ENCODE measurements at regions of chrX and their contacts with region 1.

Region 1: DNA sequence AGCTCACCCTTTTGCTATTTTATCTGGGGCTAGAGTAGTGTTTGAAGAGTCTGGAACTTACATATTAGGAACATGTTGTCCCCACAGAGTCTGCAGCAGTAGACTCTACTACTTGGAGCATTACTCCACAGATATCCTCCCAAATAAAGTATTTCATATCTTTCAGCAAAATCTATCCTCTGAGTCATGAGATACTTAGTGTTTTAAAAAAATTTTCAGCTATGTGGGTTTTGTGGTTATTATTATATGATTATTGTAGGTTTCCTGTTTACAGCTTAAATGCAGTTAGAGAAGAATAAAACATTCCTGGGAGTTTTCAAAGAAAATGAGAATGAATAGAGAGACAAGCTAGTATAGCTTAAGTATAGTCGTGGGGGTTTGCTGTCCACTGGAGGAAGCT is 30.9 kb downstream of the PAGE2 start:
- DNase-seq: no peak
- H3K4me3 ChIP-seq: no peak overlapping the region
- H3K4me3 Mint-ChIP-seq: no peak overlapping the region
- H3K27ac Mint-ChIP-seq: no peak overlapping the region
- H3K4me1 ChIP-seq: peaks cover 31% of the 10 kb centered on the region
- H3K4me1 Mint-ChIP-seq: peaks cover 13% of the 10 kb centered on the region
- H3K27me3 ChIP-seq: no peaks in the 10 kb centered on the region
- H3K27me3 Mint-ChIP-seq: no peaks in the 10 kb centered on the region
- CTCF ChIP-seq: no peak

Region 2: DNA sequence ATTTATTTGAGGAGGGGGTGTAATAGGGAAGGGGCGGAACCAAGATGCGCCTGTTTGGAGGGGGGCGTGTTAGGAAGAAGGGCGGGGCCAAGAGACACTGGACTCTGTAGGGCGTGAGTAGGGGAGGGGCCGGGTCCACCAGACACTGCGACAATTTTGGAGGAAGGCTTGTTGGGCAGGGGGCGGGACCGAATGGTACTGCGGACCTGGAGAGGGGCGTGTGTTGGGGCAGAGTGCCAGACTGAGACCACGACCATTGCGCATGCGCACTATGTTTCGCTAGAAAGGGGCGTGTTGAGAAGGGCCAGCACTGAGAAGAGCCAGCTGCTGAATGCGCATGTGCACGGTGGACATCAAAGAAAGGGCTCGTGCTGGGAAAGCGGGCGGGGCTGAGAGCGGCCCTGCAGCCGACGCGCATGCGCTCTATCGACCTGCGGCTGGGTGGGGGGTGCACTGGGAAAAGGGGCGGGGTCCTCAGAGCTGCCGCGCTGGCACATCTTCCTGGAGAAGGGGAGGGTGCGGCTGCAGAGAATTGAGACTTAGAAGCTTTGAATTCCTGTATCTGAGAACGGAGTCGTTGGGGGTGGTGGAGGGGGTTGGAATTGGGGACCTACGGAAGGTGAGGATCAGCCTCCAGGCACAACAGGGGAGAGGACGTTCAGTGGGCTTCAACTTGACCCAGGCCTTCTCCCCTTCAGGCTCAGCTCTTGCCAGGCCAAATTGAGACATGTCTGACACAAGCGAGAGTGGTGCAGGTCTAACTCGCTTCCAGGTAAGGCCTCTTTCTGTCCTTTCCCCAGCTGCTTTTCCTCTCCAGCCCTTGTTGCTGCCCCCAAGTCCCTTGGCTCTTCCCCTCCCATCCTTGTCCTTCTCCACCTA is 310.9 kb before region 1 on chrX:
- CTCF ChIA-PET with region 1: no interaction called
- POLR2A ChIA-PET with region 1: no interaction called
- intact Hi-C with region 1: loop called (anchors 10 kb)
- DNase-seq: peak; percentile 93 to 96
- H3K4me3 ChIP-seq: peak overlapping the region; percentile 64
- H3K4me3 Mint-ChIP-seq: peak overlapping the region; percentile 99
- H3K27ac Mint-ChIP-seq: peak overlapping the region; percentile 99
- H3K4me1 ChIP-seq: peaks cover 13% of the 10 kb centered on the region
- H3K4me1 Mint-ChIP-seq: peaks cover 11% of the 10 kb centered on the region
- H3K27me3 ChIP-seq: no peaks in the 10 kb centered on the region
- H3K27me3 Mint-ChIP-seq: peaks cover 3% of the 10 kb centered on the region
- CTCF ChIP-seq: no peak

Region 3: GRCh38 chrX:54999717-55000598 is 119.8 kb before region 1 on chrX and contains the start of gene APEX2:
- CTCF ChIA-PET with region 1: no interaction called
- POLR2A ChIA-PET with region 1: no interaction called
- intact Hi-C with region 1: loop called (anchors 10 kb)
- DNase-seq: peak; percentile 84 to 88
- H3K4me3 ChIP-seq: peak within 1 kb of the TSS; percentile 47
- H3K4me3 Mint-ChIP-seq: peak within 1 kb of the TSS; percentile 99
- H3K27ac Mint-ChIP-seq: peak within 1 kb of the TSS; percentile 94
- H3K4me1 ChIP-seq: no peaks in the 10 kb centered on the region
- H3K4me1 Mint-ChIP-seq: no peaks in the 10 kb centered on the region
- H3K27me3 ChIP-seq: no peaks in the 10 kb centered on the region
- H3K27me3 Mint-ChIP-seq: no peaks in the 10 kb centered on the region
- CTCF ChIP-seq: no peak
- total RNA-seq, gene APEX2: 17.0 and 19.6 TPM in 2 replicates